PC-9 (cell line): ENCODE measurements at regions of chr11 and their contacts with region 1.

Region 1: DNA sequence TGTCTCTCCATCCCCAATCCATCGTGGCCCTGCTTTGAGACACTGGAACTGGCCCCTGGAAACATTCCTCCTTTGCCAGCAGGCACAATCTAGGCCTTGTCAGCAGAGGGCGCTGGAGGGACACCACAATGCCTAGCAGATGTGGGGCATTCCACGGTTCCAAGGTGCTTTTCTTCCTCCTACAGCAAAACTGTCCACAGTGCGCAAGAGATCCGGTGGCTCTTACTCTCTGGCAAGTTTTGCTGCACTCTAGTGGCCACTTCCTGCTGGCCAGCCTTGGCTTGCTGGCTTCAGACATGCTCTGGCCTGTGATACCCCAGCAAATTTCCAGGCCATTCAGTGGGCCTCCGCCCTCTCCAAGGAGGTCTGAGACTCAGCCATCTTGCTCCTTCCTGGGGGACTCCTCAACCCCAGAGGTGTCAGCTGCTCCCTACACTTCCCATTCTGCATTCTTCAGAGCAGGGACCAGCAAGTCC is 17.1 kb upstream of the RBM4B start:
- DNase-seq: peak; percentile 94 to 96
- H3K4me3 ChIP-seq: no peak overlapping the region
- H3K27ac ChIP-seq: no peak overlapping the region
- H3K4me1 ChIP-seq: no peaks in the 10 kb centered on the region
- H3K27me3 ChIP-seq: no peaks in the 10 kb centered on the region
- CTCF ChIP-seq: peak; percentile 98

Region 2: GRCh38 chr11:66762088-66762487 is 67.3 kb after region 1 on chr11:
- CTCF ChIA-PET with region 1: no interaction called
- POLR2A ChIA-PET with region 1: no interaction called
- intact Hi-C with region 1: no loop called
- DNase-seq: no peak
- H3K4me3 ChIP-seq: no peak overlapping the region
- H3K27ac ChIP-seq: no peak overlapping the region
- H3K4me1 ChIP-seq: no peaks in the 10 kb centered on the region
- H3K27me3 ChIP-seq: no peaks in the 10 kb centered on the region
- CTCF ChIP-seq: no peak

Region 3: DNA sequence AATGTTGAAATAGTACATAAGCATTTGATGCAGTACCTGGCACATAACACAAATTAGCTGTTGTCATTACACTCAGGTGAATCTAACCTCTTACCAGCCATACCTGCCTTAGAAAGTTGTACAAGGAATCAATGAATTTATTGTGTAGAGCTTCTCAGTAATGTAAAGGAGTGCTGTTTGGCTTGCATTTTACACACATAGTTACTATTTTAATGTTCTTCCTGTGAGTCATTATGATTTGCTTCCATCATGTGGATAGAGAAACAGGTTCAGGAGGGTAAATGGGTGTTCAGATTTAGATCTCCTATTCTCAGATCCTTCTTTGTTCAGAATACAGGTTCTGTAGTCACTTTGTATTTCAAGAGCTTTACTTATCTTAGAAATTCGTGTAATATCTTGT is 120.9 kb after region 1 on chr11:
- CTCF ChIA-PET with region 1: no interaction called
- POLR2A ChIA-PET with region 1: no interaction called
- intact Hi-C with region 1: loop called (anchors 5 kb)
- DNase-seq: peak in 1 of 2 experiments; percentile 85
- H3K4me3 ChIP-seq: no peak overlapping the region
- H3K27ac ChIP-seq: peak overlapping the region; percentile 49
- H3K4me1 ChIP-seq: peaks cover 20% of the 10 kb centered on the region
- H3K27me3 ChIP-seq: no peaks in the 10 kb centered on the region
- CTCF ChIP-seq: no peak

Region 4: DNA sequence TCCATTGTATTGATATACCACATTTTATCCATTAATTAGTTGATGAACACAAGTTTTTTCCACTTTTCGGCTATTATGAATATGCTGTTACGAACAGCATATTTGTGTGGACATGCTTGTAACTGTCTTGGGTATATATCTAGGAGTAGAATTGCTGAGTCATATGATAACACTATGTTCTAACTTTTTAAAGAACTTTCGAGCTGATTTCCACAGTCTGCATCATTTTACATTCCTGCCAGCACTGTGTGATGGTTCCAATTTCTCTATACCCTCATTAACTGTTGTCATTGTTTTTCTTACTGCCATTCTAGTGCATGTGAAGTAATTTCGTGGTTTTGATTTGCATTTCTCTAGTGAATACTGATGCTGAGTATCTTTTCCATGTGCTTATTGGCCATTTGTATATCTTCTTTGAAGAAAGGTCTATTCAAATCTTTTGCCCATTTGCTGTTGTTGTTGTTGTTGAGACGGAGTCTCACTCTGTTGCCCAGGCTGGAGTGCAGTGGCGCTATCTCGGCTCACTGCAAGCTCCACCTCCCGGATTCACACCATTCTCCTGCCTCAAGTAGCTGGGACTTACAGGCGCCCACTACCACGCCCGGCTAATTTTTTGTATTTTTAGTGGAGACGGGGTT is 141.1 kb after region 1 on chr11:
- CTCF ChIA-PET with region 1: interaction called, 3 read pairs
- POLR2A ChIA-PET with region 1: no interaction called
- intact Hi-C with region 1: loop called (anchors 1 kb)
- DNase-seq: no peak
- H3K4me3 ChIP-seq: no peak overlapping the region
- H3K27ac ChIP-seq: no peak overlapping the region
- H3K4me1 ChIP-seq: peaks cover 9% of the 10 kb centered on the region
- H3K27me3 ChIP-seq: no peaks in the 10 kb centered on the region
- CTCF ChIP-seq: no peak

Region 5: GRCh38 chr11:66976048-66976467 is 281.3 kb after region 1 on chr11:
- CTCF ChIA-PET with region 1: no interaction called
- POLR2A ChIA-PET with region 1: no interaction called
- intact Hi-C with region 1: loop called (anchors 2 kb)
- DNase-seq: peak in 1 of 2 experiments; percentile 41
- H3K4me3 ChIP-seq: no peak overlapping the region
- H3K27ac ChIP-seq: no peak overlapping the region
- H3K4me1 ChIP-seq: peaks cover 47% of the 10 kb centered on the region
- H3K27me3 ChIP-seq: no peaks in the 10 kb centered on the region
- CTCF ChIP-seq: peak; percentile 91